K562 (cell line): ENCODE measurements at regions of chr2 and their contacts with region 1.

Region 1: DNA sequence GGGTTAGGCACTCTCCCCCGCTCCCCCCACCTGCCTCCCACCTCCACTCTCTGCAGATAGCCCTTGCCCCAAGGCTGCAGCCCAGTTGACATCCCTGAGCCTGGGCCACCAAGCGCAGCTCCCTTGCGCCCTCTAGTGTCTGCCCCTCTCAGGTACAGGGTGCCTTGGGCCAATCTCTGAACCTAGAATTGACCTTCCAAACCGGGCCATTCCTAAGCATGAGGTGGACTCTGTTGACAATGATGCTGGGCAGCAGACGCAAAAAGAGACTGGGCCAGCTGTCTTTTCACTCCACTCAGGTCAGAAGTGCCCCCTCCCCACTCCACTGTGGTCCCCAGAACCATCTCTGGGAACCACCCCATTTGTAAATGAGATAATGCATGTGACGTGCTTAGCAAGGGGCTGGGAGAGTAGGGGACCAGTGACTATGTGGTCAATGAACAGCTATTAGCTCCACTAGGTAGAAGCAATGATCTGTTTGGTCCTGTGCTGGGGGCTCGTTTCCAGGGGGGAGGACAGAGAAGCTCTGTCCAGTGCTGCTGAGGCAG is 43.3 kb upstream of the PLB1 start:
- DNase-seq: peak; percentile 73 to 83 (median 78)
- ATAC-seq: peak; percentile 95
- H3K4me3 ChIP-seq: no peak overlapping the region
- H3K27ac ChIP-seq: no peak overlapping the region
- H3K4me1 ChIP-seq: peaks cover 10% of the 10 kb centered on the region in 2 experiments; a peak in 4 of 5 replicates
- H3K27me3 ChIP-seq: peaks cover 0 to 23% of the 10 kb centered on the region in 2 experiments; a peak in 2 of 5 replicates
- CTCF ChIP-seq: peak; percentile 88 to 95 (median 93)
- EP300 ChIP-seq: no peak
- POLR2A ChIP-seq: no peak
- RAD21 ChIP-seq: peak; percentile 86 to 92

Region 2: DNA sequence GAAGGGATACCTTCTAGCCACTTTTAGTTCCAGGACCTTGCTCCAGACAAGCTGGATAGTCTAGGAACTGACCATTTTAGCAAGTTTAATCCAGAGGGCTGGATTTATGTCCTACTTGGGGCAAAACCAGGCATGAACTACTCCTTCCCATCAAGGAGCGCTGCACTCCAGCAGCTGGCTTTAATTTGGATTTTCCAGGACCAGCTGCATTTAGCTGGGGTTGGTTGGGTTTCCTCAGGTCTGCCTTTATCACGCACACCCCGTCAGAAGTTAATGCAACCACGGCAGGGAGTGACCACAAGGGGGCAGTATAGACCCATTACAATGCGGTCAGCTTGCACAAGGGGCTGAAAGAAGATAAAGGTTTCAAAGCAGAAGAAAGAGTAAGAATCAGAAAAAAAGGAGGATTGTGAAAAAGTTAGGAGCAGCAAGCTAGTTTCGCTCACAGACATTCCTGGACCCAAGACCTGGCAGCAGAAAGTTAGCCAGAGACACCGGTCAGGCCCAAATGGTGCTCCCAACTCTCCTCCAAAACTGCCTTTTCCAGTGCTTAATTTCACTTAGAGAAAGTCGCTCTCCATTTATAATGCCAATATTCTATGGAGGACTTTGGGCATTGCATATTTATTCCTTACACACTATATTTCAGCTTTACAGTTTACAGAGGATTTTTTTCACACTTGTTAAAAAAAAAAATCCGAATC is 748.8 kb before region 1 on chr2:
- CTCF ChIA-PET with region 1: interaction called, 11 read pairs
- POLR2A ChIA-PET with region 1: no interaction called
- in situ Hi-C with region 1: no loop called
- intact Hi-C with region 1: loop called (anchors 5 kb)
- DNase-seq: peak; percentile 81 to 89 (median 85)
- ATAC-seq: peak; percentile 94
- H3K4me3 ChIP-seq: no peak overlapping the region
- H3K27ac ChIP-seq: no peak overlapping the region
- H3K4me1 ChIP-seq: peaks cover 0 to 13% of the 10 kb centered on the region in 2 experiments; a peak in 4 of 5 replicates
- H3K27me3 ChIP-seq: no peaks in the 10 kb centered on the region
- CTCF ChIP-seq: peak; percentile 90 to 94 (median 93)
- EP300 ChIP-seq: 0 out of 2 replicates have a peak, but pooled peaks have one; percentile 15
- POLR2A ChIP-seq: no peak
- RAD21 ChIP-seq: peak; percentile 90 to 92

Region 3: DNA sequence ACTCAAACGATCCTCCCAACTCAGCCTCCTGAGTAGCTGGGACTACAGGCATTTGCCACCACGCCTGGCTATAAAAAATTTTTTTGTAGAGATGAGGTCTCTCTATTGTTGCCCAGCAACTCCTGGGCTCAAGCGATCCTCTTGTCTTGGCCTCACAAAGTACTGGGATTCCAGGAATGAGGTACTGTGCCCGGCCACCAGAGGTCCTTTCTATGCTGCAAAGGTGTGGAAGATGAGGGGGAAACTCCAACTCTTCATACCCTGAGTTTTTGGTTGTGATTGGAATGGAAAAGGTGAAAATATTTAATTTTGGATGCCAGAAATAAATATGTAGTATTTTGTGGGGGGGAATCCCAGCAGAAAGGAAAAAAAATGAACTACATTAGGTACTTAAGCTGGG is 645.1 kb before region 1 on chr2:
- CTCF ChIA-PET with region 1: no interaction called
- POLR2A ChIA-PET with region 1: no interaction called
- in situ Hi-C with region 1: no loop called
- intact Hi-C with region 1: loop called (anchors 5 kb)
- DNase-seq: peak in 2 of 4 experiments; percentile 16 to 31
- ATAC-seq: peak; percentile 83
- H3K4me3 ChIP-seq: no peak overlapping the region
- H3K27ac ChIP-seq: no peak overlapping the region
- H3K4me1 ChIP-seq: no peaks in the 10 kb centered on the region
- H3K27me3 ChIP-seq: peaks cover 10 to 24% of the 10 kb centered on the region in 2 experiments
- CTCF ChIP-seq: peak; percentile 55 to 62 (median 60)
- EP300 ChIP-seq: no peak
- POLR2A ChIP-seq: no peak
- RAD21 ChIP-seq: peak; percentile 55 to 79

Region 4: GRCh38 chr2:28751252-28751955 is 298.8 kb after region 1 on chr2 and contains the start of gene PPP1CB:
- CTCF ChIA-PET with region 1: no interaction called
- POLR2A ChIA-PET with region 1: no interaction called
- in situ Hi-C with region 1: no loop called
- intact Hi-C with region 1: no loop called
- DNase-seq: peak; percentile 95 to 97 (median 95)
- ATAC-seq: peak; percentile 90
- H3K4me3 ChIP-seq: peak within 1 kb of the TSS; percentile 90
- H3K27ac ChIP-seq: peak within 1 kb of the TSS; percentile 93
- H3K4me1 ChIP-seq: peaks cover 3 to 27% of the 10 kb centered on the region in 2 experiments
- H3K27me3 ChIP-seq: no peaks in the 10 kb centered on the region
- CTCF ChIP-seq: peak; percentile 21 to 53 (median 47); a peak in 3 of 6 replicates
- EP300 ChIP-seq: no peak
- POLR2A ChIP-seq: peak; percentile 89
- RAD21 ChIP-seq: no peak
- polyA plus RNA-seq, gene PPP1CB: 55.7 to 112 TPM